ENCODE measurements at regions of chr6 and their contacts with region 1.

Region 1: DNA sequence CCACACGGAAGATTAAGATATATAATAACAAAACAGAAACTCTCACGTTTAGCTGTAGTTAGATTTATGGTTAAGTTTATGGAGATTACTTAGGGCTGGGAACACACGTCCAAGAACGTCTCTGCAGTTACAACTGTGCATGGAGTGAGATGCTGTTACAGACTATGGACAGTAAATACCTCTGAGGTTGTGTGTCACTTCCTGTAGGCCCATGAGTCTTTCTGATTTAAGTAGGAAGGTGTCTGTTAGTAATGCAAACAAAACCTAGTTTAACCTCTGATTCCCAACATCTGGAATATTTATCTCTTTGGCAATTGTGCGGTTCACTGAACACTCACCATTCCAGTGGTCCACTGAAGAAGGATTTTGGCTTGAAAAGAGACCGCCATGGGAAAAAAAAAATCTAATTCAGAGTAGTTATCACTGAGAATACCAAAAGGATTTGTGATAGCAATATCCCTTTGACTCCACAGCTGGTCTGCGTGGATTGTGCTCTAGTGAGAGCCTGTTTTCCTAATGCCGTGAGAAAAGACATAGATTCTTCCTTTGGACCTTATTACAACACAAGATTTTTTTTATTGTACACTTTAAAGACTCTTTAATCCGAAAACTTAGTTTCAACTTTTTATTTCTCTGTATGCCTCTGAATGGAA is 478.2 kb upstream of the CITED2 start:
- DNase-seq: no peak
- H3K4me3 ChIP-seq: no peak overlapping the region
- H3K27ac ChIP-seq: peak overlapping the region in 3 of 4 donors; percentile 57 to 72 (median 69)
- H3K4me1 ChIP-seq: peaks cover 0 to 60% (median 47%) of the 10 kb centered on the region in 4 donors
- H3K27me3 ChIP-seq: no peaks in the 10 kb centered on the region
- CTCF ChIP-seq: no peak
- EP300 ChIP-seq: no peak
- POLR2A ChIP-seq: no peak

Region 2: GRCh38 chr6:139708337-139709199 is 144.0 kb before region 1 on chr6:
- intact Hi-C with region 1: no loop called
- DNase-seq: no peak
- H3K4me3 ChIP-seq: no peak overlapping the region
- H3K27ac ChIP-seq: peak overlapping the region in 3 of 4 donors; percentile 33 to 54 (median 48)
- H3K4me1 ChIP-seq: peaks cover 0 to 39% (median 33%) of the 10 kb centered on the region in 4 donors
- H3K27me3 ChIP-seq: no peaks in the 10 kb centered on the region
- CTCF ChIP-seq: no peak
- EP300 ChIP-seq: no peak
- POLR2A ChIP-seq: no peak

Region 3: DNA sequence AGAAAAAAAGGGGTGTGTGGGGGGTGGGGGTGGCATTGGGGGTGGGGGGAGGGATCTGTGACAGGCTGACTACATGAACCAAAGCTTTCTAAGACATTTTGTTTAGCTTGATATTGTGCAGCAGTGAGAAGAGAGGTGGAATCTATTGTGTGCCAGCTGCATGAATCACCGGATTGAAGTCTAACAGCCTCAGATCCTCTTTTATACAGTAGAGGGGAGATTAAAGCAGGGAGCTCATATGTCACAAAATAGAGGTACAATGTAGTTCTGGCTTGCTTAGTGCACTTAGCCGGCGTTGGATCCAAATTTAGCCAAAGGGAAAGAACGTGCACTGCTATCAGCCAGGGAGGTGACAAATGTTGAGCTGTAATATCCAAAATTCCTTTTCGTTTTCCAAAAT is 73.9 kb before region 1 on chr6:
- intact Hi-C with region 1: loop called (anchors 5 kb)
- DNase-seq: no peak
- H3K4me3 ChIP-seq: no peak overlapping the region
- H3K27ac ChIP-seq: peak overlapping the region; percentile 57 to 73 (median 67)
- H3K4me1 ChIP-seq: peaks cover 0 to 44% (median 40%) of the 10 kb centered on the region in 4 donors
- H3K27me3 ChIP-seq: no peaks in the 10 kb centered on the region
- CTCF ChIP-seq: no peak
- EP300 ChIP-seq: peak in 1 of 4 donors; percentile 42
- POLR2A ChIP-seq: no peak